MCF 10A (cell line): ENCODE measurements at regions of chr3 and their contacts with region 1.

Region 1: GRCh38 chr3:185332026-185332735 is 30.8 kb upstream of the MAP3K13 start:
- DNase-seq: peak; percentile 89
- H3K4me3 Mint-ChIP-seq: peak overlapping the region; percentile 57
- H3K27ac Mint-ChIP-seq: peak overlapping the region; percentile 80
- H3K4me1 Mint-ChIP-seq: peaks cover 20% of the 10 kb centered on the region
- H3K27me3 Mint-ChIP-seq: no peaks in the 10 kb centered on the region
- CTCF ChIP-seq: no peak

Region 2: DNA sequence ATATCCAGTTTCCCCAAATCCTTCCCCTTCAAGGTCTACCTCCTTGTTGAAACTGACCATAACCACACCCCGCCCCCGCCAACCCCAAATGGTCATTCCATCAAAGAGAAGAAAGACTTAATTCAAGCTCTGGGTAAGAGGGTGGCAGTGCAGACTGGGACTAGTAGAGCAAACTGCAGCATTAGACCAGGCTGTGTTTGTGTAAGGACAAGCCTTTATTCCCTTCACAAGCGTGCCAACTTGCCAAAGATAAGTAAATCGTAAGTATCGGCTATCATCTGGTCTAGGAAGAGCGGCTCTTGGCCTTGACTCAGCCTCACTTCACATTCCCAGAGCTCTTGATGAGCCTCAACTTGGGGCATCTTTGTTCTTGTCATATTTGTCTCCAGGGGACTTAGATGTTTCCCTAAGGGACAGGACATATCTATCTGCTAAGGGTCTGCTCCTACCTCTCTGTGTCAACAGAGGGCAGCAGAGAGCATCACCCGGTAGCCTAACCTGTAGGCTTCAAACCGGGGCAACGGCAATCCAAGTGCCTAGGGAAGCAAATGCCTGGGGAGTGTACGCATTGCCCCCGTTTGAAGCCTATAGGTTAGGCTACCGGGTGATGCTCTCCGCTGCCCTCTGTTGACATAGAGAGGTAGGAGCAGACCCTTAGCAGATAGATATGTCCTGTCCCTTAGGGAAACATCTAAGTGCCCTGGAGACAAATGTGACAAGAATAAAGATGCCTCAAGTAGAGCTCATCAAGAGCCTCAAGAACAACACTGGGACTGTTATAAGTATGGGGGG is 21.8 kb after region 1 on chr3:
- CTCF ChIA-PET with region 1: interaction called, 12 read pairs
- POLR2A ChIA-PET with region 1: interaction called, 3 read pairs
- intact Hi-C with region 1: no loop called
- DNase-seq: peak; percentile 87
- H3K4me3 Mint-ChIP-seq: no peak overlapping the region
- H3K27ac Mint-ChIP-seq: no peak overlapping the region
- H3K4me1 Mint-ChIP-seq: peaks cover 7% of the 10 kb centered on the region
- H3K27me3 Mint-ChIP-seq: no peaks in the 10 kb centered on the region
- CTCF ChIP-seq: peak; percentile 48

Region 3: DNA sequence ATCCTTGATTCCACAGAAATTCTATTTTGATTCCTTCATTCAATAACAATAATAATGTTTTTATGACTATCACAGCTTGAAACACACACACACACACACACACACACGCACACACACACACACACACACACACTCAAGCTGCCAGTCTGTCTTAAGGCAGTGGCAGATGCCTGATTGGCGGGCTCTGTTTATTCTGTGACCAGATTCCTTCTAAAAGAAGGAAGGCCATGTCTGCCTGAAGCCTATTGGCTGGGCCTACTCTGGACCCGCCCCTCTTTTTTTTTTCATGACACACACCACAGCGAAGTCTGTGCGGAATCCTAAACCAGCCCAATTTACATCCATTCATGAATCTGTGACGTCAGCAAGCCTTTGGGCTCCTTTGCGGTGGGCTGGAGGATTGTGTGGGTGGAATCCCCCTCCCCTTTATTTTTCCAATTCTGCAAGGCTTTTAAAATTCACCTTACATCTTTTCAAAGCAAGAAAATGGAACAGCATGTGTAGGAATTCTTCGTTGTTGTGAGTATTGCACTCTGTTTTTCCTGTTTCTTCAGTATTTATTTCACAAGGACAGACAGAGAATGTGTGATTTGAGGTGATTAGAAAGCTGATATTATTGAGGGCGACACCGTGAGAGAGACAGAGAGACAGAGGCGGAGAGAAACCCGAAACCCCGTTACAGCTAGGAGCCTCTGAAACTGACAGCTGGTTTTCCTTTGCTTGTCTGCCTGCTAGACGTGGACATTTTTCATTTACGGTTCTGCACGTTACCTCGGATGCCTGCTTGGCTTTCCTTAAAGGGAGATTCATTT is 30.9 kb after region 1 on chr3 and contains the start of gene MAP3K13:
- CTCF ChIA-PET with region 1: interaction called, 3 read pairs
- POLR2A ChIA-PET with region 1: interaction called, 17 read pairs
- intact Hi-C with region 1: no loop called
- DNase-seq: peak; percentile 94
- H3K4me3 Mint-ChIP-seq: peak within 1 kb of the TSS; percentile 83
- H3K27ac Mint-ChIP-seq: peak within 1 kb of the TSS; percentile 80
- H3K4me1 Mint-ChIP-seq: peaks cover 13% of the 10 kb centered on the region
- H3K27me3 Mint-ChIP-seq: no peaks in the 10 kb centered on the region
- CTCF ChIP-seq: no peak
- total RNA-seq, gene MAP3K13: 15.8 and 23.7 TPM in 2 replicates

Region 4: GRCh38 chr3:185402561-185402960 is 70.4 kb after region 1 on chr3:
- CTCF ChIA-PET with region 1: no interaction called
- POLR2A ChIA-PET with region 1: no interaction called
- intact Hi-C with region 1: no loop called
- DNase-seq: no peak
- H3K4me3 Mint-ChIP-seq: no peak overlapping the region
- H3K27ac Mint-ChIP-seq: no peak overlapping the region
- H3K4me1 Mint-ChIP-seq: no peaks in the 10 kb centered on the region
- H3K27me3 Mint-ChIP-seq: no peaks in the 10 kb centered on the region
- CTCF ChIP-seq: no peak

Region 5: DNA sequence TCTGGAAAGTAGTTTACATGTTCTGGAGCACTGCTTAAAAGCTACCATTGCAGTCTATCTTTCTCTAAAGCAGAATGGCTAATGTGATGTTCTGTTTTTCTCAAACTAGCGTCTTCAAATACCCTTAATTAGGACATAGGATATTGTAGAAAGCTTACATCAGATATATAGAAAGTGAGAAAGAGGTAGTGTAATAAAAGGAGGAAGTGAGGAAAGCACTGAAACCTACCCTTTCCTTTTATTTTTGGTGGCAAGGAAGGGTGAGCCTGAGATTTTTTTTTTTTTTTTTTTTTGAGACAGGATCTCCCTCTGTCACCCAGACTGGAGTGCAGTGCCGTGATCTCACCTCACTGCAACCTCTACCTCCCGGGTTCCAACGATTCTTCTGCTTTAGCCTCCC is 263.3 kb after region 1 on chr3:
- CTCF ChIA-PET with region 1: no interaction called
- POLR2A ChIA-PET with region 1: no interaction called
- intact Hi-C with region 1: no loop called
- DNase-seq: no peak
- H3K4me3 Mint-ChIP-seq: no peak overlapping the region
- H3K27ac Mint-ChIP-seq: no peak overlapping the region
- H3K4me1 Mint-ChIP-seq: no peaks in the 10 kb centered on the region
- H3K27me3 Mint-ChIP-seq: no peaks in the 10 kb centered on the region
- CTCF ChIP-seq: no peak